Activated T-helper 1 cell treated with anti-CD3 and anti-CD28 coated beads, Interleukin-12 subunit alpha, Interleukin-12 subunit beta, Interleukin-2, Interleukin-4 antibody, amounts not matched to agents 30 ng/mL and 10 ng/mL and 1 ng/mL, durations not matched to agents 14 hours and 24 hours and 36 hours (primary cell): ENCODE measurements at regions of chr17 and their contacts with region 1.

Region 1: DNA sequence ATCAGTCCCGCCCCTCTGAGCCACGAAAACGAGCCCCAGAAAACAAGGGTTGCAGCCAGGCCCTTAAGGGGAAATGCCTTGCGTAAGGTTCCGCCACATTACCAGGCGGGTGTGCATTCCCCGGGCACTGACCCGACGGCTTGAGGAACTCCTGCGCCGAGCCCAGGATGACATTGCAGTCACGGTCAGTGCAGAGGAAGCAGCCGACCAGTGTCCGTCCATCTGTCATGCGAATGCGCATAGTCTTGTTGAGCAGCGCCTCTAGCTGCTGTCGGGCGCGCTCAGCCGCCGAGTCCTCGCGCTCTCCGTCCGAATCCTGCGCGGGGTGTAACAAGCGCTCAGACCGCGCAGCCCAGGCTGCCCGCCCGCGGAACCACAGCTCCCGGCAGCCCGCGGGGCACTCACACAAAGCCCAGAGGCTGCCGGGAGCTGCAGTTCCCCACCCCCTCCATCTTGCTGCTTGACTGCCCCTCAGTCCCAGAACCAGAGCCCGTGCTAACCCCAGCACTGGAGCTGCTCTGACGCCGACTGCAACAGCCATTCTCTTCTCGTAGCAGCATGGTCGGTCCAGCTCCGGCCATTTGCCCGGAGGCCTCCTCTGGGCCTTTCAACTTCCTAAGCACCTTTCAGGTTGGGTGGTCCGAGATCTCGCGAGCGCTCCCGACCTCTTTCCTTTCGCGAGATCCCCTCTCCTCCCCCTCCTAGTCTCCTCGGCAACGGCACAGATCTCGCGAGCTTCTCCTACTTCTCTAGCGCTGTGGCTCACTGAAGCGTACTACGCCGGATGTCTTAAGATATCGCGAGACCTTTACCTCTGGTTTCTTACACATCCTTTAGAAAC is at the start of gene NAA38:
- DNase-seq: peak; percentile 92
- H3K4me3 Mint-ChIP-seq: no peak within 1 kb of the TSS
- H3K27ac Mint-ChIP-seq: no peak within 1 kb of the TSS
- H3K4me1 Mint-ChIP-seq: no peaks in the 10 kb centered on the region
- H3K27me3 Mint-ChIP-seq: no peaks in the 10 kb centered on the region
- total RNA-seq, gene NAA38: 36.4 and 43.5 TPM in 2 replicates

Region 2: GRCh38 chr17:7014261-7014994 is 842.7 kb before region 1 on chr17:
- intact Hi-C with region 1: loop called (anchors 10 kb)
- DNase-seq: peak; percentile 98
- H3K4me3 Mint-ChIP-seq: peak overlapping the region; percentile 99
- H3K27ac Mint-ChIP-seq: peak overlapping the region; percentile 99
- H3K4me1 Mint-ChIP-seq: peaks cover 68% of the 10 kb centered on the region
- H3K27me3 Mint-ChIP-seq: peaks cover 6% of the 10 kb centered on the region

Region 3: DNA sequence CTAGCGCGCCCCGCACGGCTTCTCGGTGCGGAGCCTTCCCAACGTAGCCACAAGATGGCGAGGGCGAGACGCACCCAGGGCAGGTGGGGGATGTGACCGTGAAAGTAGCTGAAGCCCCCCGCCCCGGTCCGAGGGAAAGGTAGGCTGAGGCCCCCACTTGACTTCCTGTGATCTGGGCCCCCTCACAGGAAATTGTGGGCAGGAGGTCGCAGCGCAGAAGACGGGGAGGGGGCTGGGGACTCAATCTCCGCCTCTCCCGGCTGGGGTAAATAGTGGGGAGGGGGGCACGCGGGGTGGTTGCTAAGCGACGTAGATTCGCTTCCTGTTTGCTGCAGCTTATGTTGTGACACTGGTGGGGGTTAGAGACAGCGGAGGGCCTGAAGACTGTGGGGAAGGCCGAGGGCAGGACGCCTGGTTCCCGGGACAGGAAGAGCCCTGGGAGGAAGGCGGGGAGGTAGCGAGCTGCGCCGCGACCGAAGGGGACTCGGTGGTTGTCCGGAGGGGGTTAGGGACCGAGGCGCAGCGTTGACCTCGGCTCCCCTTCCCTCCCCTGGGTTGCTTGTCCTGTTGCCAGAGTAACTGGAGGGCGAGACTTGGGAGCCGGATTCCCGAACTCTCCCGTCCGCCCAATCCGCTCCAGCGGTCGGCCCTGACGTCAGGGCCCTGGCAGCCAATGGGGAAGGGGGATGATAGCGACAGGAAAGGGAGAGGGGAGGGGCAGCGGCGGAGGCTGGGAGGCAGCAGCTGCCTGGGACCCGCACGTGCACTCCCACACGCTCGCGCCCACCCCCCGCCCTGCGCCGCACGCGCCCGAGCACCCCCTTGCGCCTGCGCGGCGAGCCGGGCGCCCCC is 21.9 kb before region 1 on chr17:
- intact Hi-C with region 1: loop called (anchors 1 kb)
- DNase-seq: peak; percentile 75
- H3K4me3 Mint-ChIP-seq: peak overlapping the region; percentile 96
- H3K27ac Mint-ChIP-seq: peak overlapping the region; percentile 96
- H3K4me1 Mint-ChIP-seq: peaks cover 46% of the 10 kb centered on the region
- H3K27me3 Mint-ChIP-seq: peaks cover 17% of the 10 kb centered on the region

Region 4: DNA sequence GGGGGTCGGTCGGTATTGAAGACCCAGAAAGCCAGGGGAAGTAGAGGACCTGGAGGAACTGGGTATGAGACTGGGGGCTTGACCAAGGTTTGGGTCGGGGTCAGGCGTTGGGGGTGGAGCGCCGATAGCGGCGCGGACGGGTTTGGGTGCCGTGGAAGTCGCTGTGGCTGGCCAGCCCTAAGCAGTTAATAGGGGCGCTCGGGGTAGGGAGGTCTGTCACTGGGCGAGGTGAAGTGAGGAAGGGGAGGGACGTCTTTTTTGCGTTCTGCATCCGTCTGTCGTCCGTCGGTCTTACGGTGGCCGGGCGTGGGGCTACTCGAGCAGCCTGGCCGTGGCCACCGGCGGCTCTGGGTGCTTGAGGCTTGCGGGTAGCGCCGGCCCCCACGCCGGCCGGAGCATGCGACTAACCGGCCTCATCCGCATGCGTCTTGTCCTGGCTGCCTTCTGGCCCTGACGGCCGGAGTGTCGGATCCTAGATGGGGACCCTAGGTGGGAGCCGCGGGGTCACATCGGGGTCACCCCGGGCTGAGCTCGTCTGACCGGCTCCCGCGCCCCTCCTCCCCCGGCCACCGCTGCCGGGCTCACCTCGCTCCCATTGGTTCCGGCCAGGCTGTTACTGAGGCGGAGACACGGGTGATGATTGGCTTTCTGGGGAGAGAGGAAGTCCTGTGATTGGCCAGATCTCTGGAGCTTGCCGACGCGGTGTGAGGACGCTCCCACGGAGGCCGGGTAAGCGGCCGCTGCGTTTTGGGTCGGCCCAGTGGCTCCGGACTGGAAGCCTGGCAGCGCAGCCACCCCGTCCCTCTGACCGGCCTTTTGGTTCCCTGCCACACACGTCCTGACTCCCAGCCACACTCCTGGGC is 12.6 kb before region 1 on chr17:
- intact Hi-C with region 1: loop called (anchors 1 kb)
- DNase-seq: peak; percentile 87
- H3K4me3 Mint-ChIP-seq: peak overlapping the region; percentile 89
- H3K27ac Mint-ChIP-seq: peak overlapping the region; percentile 96
- H3K4me1 Mint-ChIP-seq: peaks cover 37% of the 10 kb centered on the region
- H3K27me3 Mint-ChIP-seq: no peaks in the 10 kb centered on the region

Region 5: DNA sequence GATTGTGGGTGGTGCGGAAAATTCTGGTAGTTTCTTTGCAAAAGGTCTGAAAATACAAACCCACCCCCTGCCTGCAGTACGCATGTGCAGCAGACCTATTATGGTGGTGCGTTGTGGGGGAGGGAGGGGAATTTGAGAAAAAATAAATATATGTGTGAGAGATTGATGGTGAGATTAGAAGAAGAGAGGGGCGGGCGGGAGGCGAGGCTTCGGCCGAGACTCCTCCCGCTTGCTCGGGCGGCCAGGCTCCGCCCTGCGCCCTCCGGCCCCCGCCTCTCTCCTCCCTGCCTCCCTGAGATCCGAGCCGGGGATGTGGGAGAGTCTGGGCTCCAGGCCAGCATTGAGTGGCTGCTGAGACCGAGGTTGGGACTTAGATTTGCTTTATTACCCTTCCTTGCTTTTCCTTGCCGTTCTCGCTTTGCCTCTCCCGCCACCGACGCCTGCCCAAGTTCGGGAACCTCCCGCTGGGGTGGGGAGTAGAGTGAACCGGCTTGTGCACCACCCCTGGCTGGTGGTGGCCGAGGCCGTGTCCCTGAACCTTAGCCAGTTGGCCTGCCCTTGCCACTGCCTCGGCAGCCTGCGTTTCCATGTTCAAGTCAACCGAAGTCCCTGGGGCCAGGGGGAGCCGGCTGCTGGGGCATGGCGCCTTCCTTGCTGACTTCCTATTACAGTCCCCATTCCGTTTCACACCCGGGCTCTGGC is 30.5 kb after region 1 on chr17:
- intact Hi-C with region 1: loop called (anchors 1 kb)
- DNase-seq: peak; percentile 77
- H3K4me3 Mint-ChIP-seq: no peak overlapping the region
- H3K27ac Mint-ChIP-seq: no peak overlapping the region
- H3K4me1 Mint-ChIP-seq: peaks cover 3% of the 10 kb centered on the region
- H3K27me3 Mint-ChIP-seq: no peaks in the 10 kb centered on the region

Region 6: DNA sequence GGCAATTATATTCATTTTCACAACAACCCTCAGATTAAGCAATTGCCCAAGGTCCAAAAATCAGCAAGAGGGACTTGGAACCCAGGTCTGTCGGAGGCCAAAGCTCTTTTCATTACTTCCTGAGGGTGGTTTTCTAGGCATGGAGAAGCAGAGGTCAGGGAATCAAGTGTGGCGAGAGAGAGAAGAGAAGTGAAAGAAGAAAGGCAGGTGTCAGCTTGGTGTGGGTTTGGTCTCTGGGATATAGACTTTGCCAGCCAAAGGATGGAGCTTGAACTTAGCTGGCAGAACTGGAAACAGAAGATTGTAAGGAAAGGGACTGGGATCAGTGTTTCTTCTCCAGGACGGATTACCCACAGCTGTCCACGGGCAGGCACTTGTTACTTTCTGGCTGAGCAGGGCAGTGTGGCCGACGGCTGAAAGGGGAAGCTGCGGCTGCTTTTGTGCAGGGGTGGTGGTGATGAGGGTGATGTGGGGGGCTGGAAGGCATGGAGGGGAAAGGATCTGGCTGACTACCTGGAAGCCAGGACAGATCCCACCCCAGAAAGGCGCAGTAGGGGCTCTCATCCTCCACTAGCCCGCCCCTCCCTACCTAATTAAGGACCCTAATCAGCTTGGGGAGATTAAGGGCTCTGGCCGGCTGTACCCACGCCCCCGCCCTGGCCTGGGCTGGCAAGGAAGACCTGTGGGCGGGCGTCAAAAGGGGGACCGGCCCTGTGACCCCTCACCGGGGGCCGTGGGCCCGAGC is 145.0 kb after region 1 on chr17 and contains the start of gene GUCY2D:
- intact Hi-C with region 1: no loop called
- DNase-seq: no peak
- H3K4me3 Mint-ChIP-seq: peak within 1 kb of the TSS; percentile 11
- H3K27ac Mint-ChIP-seq: no peak within 1 kb of the TSS
- H3K4me1 Mint-ChIP-seq: peaks cover 7% of the 10 kb centered on the region
- H3K27me3 Mint-ChIP-seq: peaks cover 51% of the 10 kb centered on the region
- total RNA-seq, gene GUCY2D: not detected in 2 replicates